Activated CD8-positive, alpha-beta T cell treated with anti-CD3 and anti-CD28 coated beads, Interleukin-2, amount 10 ng/mL, durations not matched to agents 7 days and 5 days (primary cell): ENCODE measurements at regions of chr6 and their contacts with region 1.

Region 1: DNA sequence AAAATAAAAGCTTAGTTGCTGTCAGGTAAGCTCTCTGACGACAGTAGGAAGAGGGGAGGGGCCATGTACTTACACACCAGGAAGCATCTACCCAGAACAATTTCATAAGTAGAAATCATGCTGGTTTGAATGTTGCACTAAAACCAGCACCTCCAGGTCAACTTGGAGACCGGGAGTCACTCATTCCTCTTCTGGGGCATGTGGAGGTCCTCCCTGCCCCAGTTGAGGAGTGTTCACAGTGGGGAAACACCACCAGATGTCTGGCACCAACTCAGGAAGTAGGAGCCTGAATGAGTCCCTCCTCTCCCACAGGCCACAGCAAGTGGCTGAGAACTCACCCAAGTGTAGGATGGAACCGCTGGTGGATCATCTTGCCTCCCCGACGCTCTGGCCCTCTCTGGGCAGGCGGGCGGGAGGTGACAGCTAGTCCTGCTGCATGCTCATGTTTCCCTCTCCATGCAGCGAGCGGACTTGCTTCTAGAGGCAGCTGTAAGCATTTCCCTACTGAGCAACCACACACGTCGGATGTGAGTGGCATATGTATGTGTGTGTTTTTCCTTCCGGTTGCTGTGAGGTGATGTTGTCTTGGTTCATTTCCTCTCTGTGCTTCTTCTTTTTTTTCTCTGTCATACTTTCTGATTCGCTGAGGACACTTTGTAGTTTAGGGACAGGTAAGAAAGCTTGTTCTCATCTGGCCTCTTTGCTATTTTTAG is 149.5 kb upstream of the NEDD9 start:
- DNase-seq: peak; percentile 87
- ATAC-seq: peak; percentile 95
- H3K4me3 Mint-ChIP-seq: peak overlapping the region; percentile 91
- H3K27ac Mint-ChIP-seq: peak overlapping the region; percentile 96
- H3K4me1 Mint-ChIP-seq: peaks cover 53% of the 10 kb centered on the region
- H3K27me3 Mint-ChIP-seq: peaks cover 2% of the 10 kb centered on the region

Region 2: GRCh38 chr6:11101417-11101816 is 280.5 kb before region 1 on chr6:
- CTCF ChIA-PET with region 1: no interaction called
- POLR2A ChIA-PET with region 1: no interaction called
- DNase-seq: no peak
- ATAC-seq: no peak
- H3K4me3 Mint-ChIP-seq: no peak overlapping the region
- H3K27ac Mint-ChIP-seq: no peak overlapping the region
- H3K4me1 Mint-ChIP-seq: peaks cover 23% of the 10 kb centered on the region
- H3K27me3 Mint-ChIP-seq: no peaks in the 10 kb centered on the region

Region 3: DNA sequence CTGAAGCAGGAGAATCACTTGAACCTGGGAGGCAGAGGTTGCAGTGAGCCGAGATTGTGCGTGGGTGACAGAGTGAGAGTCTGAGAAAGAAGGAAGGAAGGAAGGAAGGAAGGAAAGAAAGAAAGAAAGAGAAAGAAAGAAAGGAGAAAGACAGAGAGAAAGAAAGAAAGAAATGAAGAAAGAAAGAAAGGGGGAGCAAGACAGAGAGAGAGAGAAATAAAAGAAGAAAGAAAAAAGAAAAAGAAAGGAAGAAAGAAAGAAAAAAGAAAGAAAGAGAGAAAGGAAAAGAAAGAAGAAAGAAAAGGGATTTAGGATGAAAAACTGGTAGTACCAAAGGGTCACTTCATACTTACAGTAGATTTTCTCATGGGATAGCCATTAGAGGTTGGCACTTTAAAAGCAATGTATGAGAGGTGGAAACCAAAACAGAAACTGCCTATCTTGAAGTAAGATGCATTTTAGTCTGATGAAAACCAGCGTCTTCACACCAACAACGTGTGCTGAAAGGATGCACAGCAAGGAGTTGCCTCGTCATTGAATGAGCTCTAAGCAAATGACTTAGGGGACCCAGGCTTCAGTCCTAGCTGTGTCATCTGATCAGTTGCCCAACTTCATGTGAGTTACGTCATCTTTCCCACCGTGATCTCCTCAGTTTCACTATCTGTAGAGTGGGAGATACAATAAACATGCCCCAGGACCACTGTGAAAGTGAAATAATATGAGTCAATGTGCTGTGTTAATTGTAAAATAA is 15.6 kb before region 1 on chr6:
- CTCF ChIA-PET with region 1: interaction called, 16 read pairs
- POLR2A ChIA-PET with region 1: interaction called, 29 read pairs
- DNase-seq: peak; percentile 67
- ATAC-seq: peak; percentile 82
- H3K4me3 Mint-ChIP-seq: peak overlapping the region; percentile 30
- H3K27ac Mint-ChIP-seq: peak overlapping the region; percentile 80
- H3K4me1 Mint-ChIP-seq: peaks cover 66% of the 10 kb centered on the region
- H3K27me3 Mint-ChIP-seq: no peaks in the 10 kb centered on the region

Region 4: DNA sequence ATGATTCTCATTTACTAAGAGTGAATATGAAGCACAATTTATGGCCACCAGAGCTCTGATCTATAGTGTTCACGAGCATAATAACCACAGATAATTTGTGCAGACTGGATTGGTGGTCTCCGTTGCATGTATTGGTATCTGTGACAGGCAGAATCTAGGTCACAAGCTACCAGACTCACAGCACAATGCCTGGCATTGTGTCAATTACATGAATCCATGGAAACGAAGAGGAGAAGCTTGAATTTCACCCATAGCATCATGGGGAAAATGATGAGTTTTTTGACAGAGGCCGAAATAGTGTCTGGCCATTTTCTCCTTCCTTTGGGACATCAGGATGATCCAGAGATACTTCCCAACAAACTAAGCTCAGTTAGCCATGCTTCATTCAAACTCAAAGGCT is 103.3 kb after region 1 on chr6:
- CTCF ChIA-PET with region 1: no interaction called
- POLR2A ChIA-PET with region 1: no interaction called
- DNase-seq: no peak
- ATAC-seq: no peak
- H3K4me3 Mint-ChIP-seq: no peak overlapping the region
- H3K27ac Mint-ChIP-seq: no peak overlapping the region
- H3K4me1 Mint-ChIP-seq: no peaks in the 10 kb centered on the region
- H3K27me3 Mint-ChIP-seq: peaks cover 7% of the 10 kb centered on the region